ENCODE measurements at regions of chr3 and their contacts with region 1.

Region 1: DNA sequence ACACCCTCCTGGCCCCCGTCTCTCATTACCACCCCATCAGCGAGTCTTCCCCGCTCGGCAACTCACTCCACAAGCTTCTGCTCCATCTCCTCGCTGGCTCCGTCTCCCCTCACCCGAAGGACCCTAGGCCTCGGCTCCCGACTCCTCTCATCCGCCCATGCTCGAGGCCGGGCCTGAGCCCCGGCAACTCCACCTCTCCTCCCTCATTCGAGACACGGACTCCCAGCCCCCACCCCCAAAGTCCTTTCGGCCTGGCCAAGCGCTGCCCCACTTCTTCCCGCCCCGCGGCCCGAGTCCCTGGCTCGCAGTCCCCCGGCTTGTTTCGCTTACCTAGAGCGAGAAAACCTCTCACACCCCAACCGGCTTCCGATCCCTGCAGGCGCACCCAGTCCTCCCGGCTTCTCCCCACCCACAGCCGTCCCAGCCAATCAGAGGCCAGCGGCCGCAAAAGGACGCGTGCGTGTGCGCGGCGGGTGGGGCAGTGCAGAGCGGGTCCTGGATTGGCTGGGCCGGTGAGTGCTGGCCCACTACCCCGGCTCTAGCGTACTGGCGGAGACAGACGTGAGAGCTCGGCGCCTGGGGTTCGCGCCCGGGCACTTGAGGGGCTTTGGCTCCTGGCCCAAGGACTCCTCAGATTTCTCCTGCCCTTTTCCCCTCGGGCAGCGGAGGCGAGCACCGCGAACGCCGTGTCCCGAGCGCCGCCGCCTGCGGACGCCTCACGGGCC is at the start of gene HIGD1A:
- H3K4me3 ChIP-seq: peak within 1 kb of the TSS; percentile 73
- H3K27ac ChIP-seq: peak within 1 kb of the TSS; percentile 84
- H3K4me1 ChIP-seq: peaks cover 6% of the 10 kb centered on the region
- CTCF ChIP-seq: no peak

Region 2: GRCh38 chr3:42755681-42756578 is 48.3 kb before region 1 on chr3:
- CTCF ChIA-PET with region 1: no interaction called
- POLR2A ChIA-PET with region 1: interaction called, 12 read pairs
- H3K4me3 ChIP-seq: no peak overlapping the region
- H3K27ac ChIP-seq: no peak overlapping the region
- H3K4me1 ChIP-seq: no peaks in the 10 kb centered on the region
- CTCF ChIP-seq: no peak

Region 3: DNA sequence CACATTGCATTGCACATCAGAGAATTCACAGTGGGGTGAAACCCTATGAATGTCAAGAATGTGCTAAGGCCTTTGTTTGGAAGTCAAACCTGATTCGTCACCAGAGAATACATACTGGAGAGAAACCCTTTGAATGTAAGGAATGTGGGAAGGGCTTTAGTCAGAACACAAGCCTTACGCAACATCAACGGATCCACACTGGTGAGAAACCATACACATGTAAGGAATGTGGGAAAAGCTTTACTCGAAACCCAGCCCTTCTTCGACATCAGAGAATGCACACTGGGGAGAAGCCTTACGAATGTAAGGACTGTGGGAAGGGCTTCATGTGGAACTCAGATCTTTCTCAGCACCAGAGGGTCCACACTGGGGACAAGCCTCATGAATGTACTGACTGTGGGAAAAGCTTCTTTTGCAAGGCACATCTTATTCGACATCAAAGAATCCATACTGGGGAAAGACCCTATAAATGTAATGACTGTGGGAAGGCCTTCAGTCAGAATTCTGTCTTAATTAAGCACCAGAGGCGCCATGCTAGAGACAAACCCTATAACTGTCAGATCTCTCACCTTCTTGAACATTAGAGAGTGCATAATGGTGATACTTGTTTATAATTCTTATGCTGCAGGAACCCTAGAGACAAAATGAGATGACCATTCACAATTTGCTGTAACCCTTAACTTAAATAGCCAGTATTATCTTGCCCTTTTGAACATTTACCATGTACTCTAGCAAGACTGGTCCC is 110.7 kb after region 1 on chr3:
- CTCF ChIA-PET with region 1: no interaction called
- POLR2A ChIA-PET with region 1: no interaction called
- H3K4me3 ChIP-seq: no peak overlapping the region
- H3K27ac ChIP-seq: no peak overlapping the region
- H3K4me1 ChIP-seq: no peaks in the 10 kb centered on the region
- CTCF ChIP-seq: no peak

Measured in HEK293 (cell line).